Activated CD8-positive, alpha-beta T cell treated with anti-CD3 and anti-CD28 coated beads for 36 hours (primary cell): ENCODE measurements at regions of chr6 and their contacts with region 1.

Region 1: DNA sequence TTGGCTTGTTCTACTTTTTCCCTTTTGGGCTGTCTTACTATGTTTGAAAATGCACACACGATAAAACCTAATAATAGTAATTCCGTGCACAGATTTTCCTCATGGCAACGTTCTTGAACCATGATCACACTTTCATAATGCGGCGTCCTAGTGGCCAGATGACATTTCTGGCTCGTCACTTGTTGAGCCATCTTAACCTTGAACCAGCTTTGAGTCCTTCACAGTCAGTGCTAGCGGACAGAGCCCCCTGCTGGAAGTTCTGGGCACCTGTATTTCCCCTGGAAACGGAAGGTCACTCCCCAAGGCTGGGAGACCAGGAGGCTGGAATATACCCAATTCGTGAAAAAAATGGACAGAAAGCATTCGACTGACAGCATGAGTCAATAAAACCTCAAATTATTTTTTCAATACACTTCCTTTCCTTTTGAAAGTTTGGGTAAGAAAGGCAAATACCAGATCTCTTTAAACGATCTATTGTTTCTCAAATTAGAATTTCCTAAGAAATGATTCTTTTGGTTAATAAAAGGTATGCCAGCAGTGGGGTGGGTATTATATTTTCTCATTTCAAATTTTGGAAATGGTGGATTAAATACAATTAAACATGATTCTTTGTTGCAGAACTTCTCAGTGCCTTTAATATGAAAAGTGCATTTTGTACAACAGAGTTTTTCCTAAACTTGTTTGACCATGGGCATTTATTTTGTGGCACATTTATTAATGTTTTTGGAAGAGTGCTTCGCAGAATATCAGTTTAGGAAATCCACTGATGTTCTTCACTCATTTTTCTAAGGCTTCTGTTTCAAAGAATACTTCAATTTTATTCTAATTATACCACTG is 542.3 kb downstream of the QKI start:
- DNase-seq: peak; percentile 69
- ATAC-seq: peak; percentile 70
- H3K4me3 Mint-ChIP-seq: no peak overlapping the region
- H3K27ac Mint-ChIP-seq: no peak overlapping the region
- H3K4me1 Mint-ChIP-seq: no peaks in the 10 kb centered on the region
- H3K27me3 Mint-ChIP-seq: peaks cover 24% of the 10 kb centered on the region
- CTCF ChIP-seq: peak; percentile 82

Region 2: DNA sequence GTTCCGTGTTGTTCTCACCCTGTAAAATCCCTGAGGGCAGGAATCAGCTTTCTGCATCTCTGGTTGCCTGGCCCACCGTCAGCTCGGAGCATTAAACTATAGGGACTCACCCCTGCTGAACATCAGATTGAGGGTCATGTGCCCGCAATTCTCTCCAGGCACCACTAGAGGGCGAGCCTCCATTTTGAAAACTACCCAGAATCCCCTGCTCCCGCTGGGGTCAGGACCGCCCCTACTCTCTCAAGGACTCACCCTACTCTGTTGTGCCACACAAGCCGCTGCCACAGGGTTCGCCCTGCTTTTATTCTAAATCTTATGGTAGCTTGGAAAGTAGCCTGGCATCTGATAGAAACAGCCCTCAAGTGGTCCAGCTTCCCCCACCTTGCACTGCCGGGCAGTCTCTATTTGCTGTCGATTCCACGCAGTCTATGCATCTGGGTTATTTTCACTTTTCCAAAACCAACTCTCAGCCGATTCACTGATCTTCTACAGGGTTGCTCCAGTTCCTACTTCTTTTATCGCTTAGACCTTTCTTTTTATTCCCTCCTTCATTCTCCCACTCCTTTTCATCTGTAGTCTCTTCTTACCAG is 786.4 kb before region 1 on chr6:
- CTCF ChIA-PET with region 1: interaction called, 7 read pairs
- POLR2A ChIA-PET with region 1: no interaction called
- intact Hi-C with region 1: loop called (anchors 10 kb)
- DNase-seq: peak; percentile 50
- ATAC-seq: peak; percentile 89
- H3K4me3 Mint-ChIP-seq: no peak overlapping the region
- H3K27ac Mint-ChIP-seq: no peak overlapping the region
- H3K4me1 Mint-ChIP-seq: no peaks in the 10 kb centered on the region
- H3K27me3 Mint-ChIP-seq: peaks cover under 1% of the 10 kb centered on the region
- CTCF ChIP-seq: peak; percentile 85

Region 3: DNA sequence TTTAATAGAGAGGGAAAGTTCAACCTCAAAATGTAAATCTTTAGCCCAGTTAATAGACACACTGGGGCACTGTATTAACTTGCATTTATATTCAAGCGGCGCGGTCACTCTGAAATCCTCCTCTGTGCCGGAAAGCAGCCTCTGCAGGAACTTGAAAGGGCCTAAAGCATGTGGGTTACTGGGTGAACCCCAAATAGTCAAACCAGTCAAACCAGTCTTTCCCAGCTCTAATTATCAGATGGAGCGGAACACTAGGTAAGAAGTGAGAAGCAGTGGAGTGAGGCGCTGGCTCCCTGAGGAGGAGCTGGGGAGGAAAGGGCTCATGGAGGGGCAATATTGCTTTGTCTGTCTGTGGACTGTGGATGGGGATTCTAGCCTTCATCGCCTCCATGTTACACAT is 11.0 kb before region 1 on chr6:
- CTCF ChIA-PET with region 1: interaction called, 12 read pairs
- POLR2A ChIA-PET with region 1: no interaction called
- intact Hi-C with region 1: no loop called
- DNase-seq: no peak
- ATAC-seq: no peak
- H3K4me3 Mint-ChIP-seq: no peak overlapping the region
- H3K27ac Mint-ChIP-seq: no peak overlapping the region
- H3K4me1 Mint-ChIP-seq: no peaks in the 10 kb centered on the region
- H3K27me3 Mint-ChIP-seq: peaks cover 20% of the 10 kb centered on the region
- CTCF ChIP-seq: no peak